MCF 10A (cell line): ENCODE measurements at regions of chr16 and their contacts with region 1.

Region 1: DNA sequence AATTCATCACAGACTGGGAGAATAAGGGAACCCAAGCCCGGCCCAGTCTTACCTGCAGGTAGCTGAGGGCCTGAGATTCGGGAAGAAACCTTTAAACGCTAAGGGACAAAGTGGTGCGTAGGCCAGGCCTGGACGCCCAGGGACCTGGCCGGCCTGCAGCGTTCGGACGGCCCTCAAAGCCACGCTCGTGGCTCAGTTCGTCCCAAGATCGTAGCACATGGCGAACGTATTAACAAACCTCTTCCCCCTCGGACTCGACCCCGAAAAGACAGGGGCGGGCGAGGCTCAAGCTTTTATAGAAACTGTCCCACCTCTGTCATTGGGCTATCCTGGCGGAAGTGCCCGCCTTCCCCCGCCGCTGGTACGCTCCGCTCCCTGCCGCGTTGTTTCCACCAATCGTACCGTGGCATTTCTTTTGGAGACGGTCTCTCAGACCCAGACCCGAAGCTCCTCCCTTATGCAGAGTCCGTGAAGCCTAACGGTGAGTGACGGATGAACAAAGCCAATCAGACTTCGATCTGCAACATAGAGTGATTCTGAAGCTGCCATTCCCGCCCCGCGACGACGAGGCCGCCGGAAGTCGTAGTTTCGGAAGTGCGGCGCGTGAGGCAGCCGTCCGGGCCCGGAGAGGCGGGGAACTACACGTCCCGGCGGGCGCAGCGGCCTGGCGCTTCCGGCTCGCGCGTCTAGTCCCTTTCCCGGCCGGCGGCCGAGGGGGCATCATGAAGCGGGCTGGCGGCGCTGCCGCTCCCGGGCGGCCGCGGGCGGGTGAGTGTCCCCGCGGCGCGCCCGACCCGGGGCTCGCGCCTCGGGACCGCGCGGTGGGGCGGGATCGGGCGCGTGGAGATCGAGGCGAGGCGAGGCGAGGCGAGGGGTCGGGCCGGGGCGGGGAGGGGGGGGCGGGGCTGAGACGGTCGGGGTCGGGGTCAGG is at the start of gene TRAF7:
- DNase-seq: peak; percentile 100
- H3K4me3 Mint-ChIP-seq: peak within 1 kb of the TSS; percentile 96
- H3K27ac Mint-ChIP-seq: peak within 1 kb of the TSS; percentile 82
- H3K4me1 Mint-ChIP-seq: peaks cover 29% of the 10 kb centered on the region
- H3K27me3 Mint-ChIP-seq: no peaks in the 10 kb centered on the region
- CTCF ChIP-seq: no peak
- total RNA-seq, gene TRAF7: 87.4 and 98.6 TPM in 2 replicates

Region 2: GRCh38 chr16:1356061-1356900 is 799.1 kb before region 1 on chr16:
- CTCF ChIA-PET with region 1: no interaction called
- POLR2A ChIA-PET with region 1: no interaction called
- intact Hi-C with region 1: no loop called
- DNase-seq: no peak
- H3K4me3 Mint-ChIP-seq: no peak overlapping the region
- H3K27ac Mint-ChIP-seq: no peak overlapping the region
- H3K4me1 Mint-ChIP-seq: peaks cover 36% of the 10 kb centered on the region
- H3K27me3 Mint-ChIP-seq: no peaks in the 10 kb centered on the region
- CTCF ChIP-seq: no peak

Region 3: DNA sequence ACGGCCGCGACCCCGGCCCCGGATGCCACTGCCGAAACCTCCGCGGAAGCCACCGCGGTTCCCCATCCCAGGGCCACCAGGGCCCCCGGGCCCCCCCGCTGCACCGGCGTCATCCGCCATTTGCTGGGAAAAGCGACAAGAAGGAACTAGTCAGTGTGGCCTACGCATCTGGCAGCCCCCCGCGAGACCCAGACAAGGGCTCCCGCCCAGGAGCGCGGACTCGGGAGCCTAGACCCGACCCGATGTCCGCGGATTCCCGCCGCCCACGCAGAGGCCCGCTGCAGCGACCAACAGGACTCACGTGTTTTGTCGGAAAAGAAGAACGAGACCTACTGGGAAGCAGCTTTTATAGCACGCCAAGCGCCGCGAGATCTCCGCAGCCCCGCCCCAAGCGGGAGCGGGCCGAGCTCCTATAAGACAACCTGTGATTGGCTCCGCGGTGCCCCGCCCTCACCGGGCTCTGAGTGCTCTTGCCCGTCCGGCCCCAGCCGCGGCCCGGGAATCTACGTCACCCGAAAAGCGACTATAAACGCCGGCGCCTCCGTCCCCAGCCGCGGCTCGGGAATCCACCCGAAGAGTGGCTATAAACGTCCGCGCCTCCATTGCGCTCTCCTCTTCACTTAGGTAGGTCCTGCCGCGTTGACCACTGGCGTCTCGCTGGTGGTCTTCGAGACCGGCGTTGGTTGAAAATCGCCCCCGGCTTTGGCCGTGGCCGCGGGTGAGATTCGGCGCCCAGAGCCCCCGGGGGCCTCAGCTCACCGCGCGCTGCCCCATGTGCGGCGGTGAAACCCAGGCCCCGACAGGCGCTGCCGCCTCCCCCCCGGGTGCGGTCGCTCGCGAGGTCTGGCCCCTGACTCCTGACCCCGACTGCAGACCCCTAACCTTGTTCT is 190.6 kb before region 1 on chr16 and contains the start of gene RPS2:
- CTCF ChIA-PET with region 1: no interaction called
- POLR2A ChIA-PET with region 1: interaction called, 72 read pairs
- intact Hi-C with region 1: no loop called
- DNase-seq: peak; percentile 98
- H3K4me3 Mint-ChIP-seq: peak within 1 kb of the TSS; percentile 78
- H3K27ac Mint-ChIP-seq: peak within 1 kb of the TSS; percentile 95
- H3K4me1 Mint-ChIP-seq: peaks cover 23% of the 10 kb centered on the region
- H3K27me3 Mint-ChIP-seq: no peaks in the 10 kb centered on the region
- CTCF ChIP-seq: no peak
- total RNA-seq, gene RPS2: 4,760 and 4,836 TPM in 2 replicates

Region 4: DNA sequence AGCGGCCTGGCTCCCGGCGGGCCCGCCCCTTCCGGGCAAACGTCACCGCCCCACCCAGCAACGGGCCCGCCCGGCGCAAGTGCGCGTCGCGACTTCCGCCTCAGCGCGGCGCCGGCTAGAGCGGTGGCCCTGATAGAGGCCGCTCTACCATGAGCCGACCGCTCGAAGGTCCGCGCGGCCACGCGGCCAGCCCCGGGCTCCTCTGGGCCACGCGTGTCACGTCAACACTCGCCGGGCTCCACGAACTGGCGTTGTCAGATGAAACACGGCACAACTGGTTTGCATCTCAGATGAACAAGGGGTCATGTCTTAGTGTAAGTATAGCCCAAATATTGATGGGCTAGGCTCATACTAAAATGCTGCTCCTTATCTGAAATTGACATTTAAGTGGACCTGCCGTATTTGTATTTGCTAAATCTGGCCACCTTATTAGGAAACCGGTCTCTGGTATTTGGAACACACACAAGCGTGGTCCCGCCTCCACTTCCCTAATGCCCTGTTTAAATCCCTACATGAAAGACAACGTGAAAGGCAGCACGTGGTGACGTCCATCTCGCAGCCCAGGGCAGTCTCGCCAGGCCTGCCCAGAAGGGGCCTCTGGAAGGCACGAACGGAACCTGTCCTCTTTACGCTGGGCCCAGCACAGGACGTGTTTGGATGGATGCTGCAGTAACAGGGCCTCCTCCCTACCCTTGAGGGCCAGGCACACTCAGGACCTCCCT is 145.4 kb before region 1 on chr16 and contains the start of gene ZNF598:
- CTCF ChIA-PET with region 1: interaction called, 6 read pairs
- POLR2A ChIA-PET with region 1: interaction called, 35 read pairs
- intact Hi-C with region 1: no loop called
- DNase-seq: peak; percentile 86
- H3K4me3 Mint-ChIP-seq: peak within 1 kb of the TSS; percentile 79
- H3K27ac Mint-ChIP-seq: peak within 1 kb of the TSS; percentile 97
- H3K4me1 Mint-ChIP-seq: peaks cover 17% of the 10 kb centered on the region
- H3K27me3 Mint-ChIP-seq: no peaks in the 10 kb centered on the region
- CTCF ChIP-seq: no peak
- total RNA-seq, gene ZNF598: 177 and 252 TPM in 2 replicates

Region 5: GRCh38 chr16:2121853-2122252 is 33.5 kb before region 1 on chr16:
- CTCF ChIA-PET with region 1: interaction called, 4 read pairs
- POLR2A ChIA-PET with region 1: interaction called, 12 read pairs
- intact Hi-C with region 1: no loop called
- DNase-seq: no peak
- H3K4me3 Mint-ChIP-seq: peak overlapping the region; percentile 47
- H3K27ac Mint-ChIP-seq: no peak overlapping the region
- H3K4me1 Mint-ChIP-seq: peaks cover 20% of the 10 kb centered on the region
- H3K27me3 Mint-ChIP-seq: no peaks in the 10 kb centered on the region
- CTCF ChIP-seq: no peak

Region 6: DNA sequence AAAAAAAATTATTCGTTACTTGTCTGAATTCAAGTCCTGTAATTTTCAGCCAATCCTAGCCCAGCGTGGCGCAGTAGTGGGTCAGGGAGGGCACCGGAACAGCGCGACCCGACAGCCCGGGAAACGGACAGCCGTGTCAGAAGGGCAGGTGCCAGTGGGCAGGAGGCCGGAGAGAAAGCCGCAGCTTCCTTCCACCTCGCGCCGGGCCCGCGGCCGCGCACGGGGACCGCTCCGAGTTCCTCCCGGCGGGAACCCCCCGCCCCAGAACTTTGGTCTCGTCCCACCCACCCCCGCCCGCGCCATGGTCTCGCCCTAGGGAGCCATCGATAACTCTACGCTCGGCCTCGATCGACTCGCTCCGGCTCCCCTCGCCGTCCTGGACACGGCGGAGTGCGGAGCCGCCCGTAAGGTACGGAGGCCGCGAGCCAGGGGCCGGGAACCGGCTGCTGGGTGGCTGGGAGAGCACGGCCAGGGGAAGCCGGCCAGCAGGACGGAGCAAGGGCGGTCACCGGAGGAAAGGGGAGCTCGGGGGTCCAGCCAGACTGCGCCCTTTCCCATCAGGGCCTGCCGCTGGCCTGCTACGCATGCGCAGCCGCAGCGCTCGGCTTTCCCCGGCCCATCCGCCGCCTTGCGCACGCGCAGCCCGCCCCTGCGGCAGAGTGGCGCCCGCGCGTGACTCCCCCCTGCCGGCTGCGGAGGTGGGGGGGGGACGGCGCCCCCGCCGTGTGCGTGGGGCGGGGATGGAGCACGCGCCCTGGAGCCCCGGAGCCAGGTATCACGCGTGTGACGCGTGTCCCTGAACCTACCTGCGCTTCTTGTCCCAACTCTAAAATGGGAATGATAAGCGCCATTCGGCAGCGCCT is 50.0 kb after region 1 on chr16 and contains the start of gene MLST8:
- CTCF ChIA-PET with region 1: interaction called, 3 read pairs
- POLR2A ChIA-PET with region 1: interaction called, 27 read pairs
- intact Hi-C with region 1: loop called (anchors 5 kb)
- DNase-seq: peak; percentile 79
- H3K4me3 Mint-ChIP-seq: peak within 1 kb of the TSS; percentile 68
- H3K27ac Mint-ChIP-seq: peak within 1 kb of the TSS; percentile 69
- H3K4me1 Mint-ChIP-seq: peaks cover 15% of the 10 kb centered on the region
- H3K27me3 Mint-ChIP-seq: no peaks in the 10 kb centered on the region
- CTCF ChIP-seq: peak; percentile 13
- total RNA-seq, gene MLST8: 63.4 and 87.6 TPM in 2 replicates

Region 7: GRCh38 chr16:2251483-2252240 is 96.3 kb after region 1 on chr16 and contains the start of gene ECI1:
- CTCF ChIA-PET with region 1: interaction called, 3 read pairs
- POLR2A ChIA-PET with region 1: interaction called, 58 read pairs
- intact Hi-C with region 1: no loop called
- DNase-seq: peak; percentile 94
- H3K4me3 Mint-ChIP-seq: peak within 1 kb of the TSS; percentile 92
- H3K27ac Mint-ChIP-seq: peak within 1 kb of the TSS; percentile 91
- H3K4me1 Mint-ChIP-seq: no peaks in the 10 kb centered on the region
- H3K27me3 Mint-ChIP-seq: no peaks in the 10 kb centered on the region
- CTCF ChIP-seq: peak; percentile 51
- total RNA-seq, gene ECI1: 115 and 154 TPM in 2 replicates